IMR-90 (cell line): ENCODE measurements at regions of chr11 and their contacts with region 1.

Region 1: GRCh38 chr11:114705280-114706024 is 27.1 kb downstream of the NXPE2 start:
- DNase-seq: no peak
- ATAC-seq: no peak
- H3K4me3 ChIP-seq: no peak overlapping the region
- H3K27ac ChIP-seq: no peak overlapping the region
- H3K4me1 ChIP-seq: no peaks in the 10 kb centered on the region
- H3K27me3 ChIP-seq: no peaks in the 10 kb centered on the region
- CTCF ChIP-seq: no peak
- POLR2A ChIP-seq: no peak
- RAD21 ChIP-seq: no peak

Region 2: GRCh38 chr11:114501901-114502300 is 203.6 kb before region 1 on chr11:
- CTCF ChIA-PET with region 1: interaction called, 13 read pairs
- POLR2A ChIA-PET with region 1: no interaction called
- dilution Hi-C with region 1: no loop called
- in situ Hi-C with region 1: no loop called
- intact Hi-C with region 1: no loop called
- DNase-seq: no peak
- ATAC-seq: no peak
- H3K4me3 ChIP-seq: no peak overlapping the region
- H3K27ac ChIP-seq: no peak overlapping the region
- H3K4me1 ChIP-seq: no peaks in the 10 kb centered on the region
- H3K27me3 ChIP-seq: no peaks in the 10 kb centered on the region
- CTCF ChIP-seq: no peak
- POLR2A ChIP-seq: no peak
- RAD21 ChIP-seq: no peak